Common myeloid progenitor, CD34-positive (primary cell): ENCODE measurements at regions of chr1 and their contacts with region 1.

Region 1: GRCh38 chr1:24847995-24848881 is 81.8 kb downstream of the RUNX3 start:
- DNase-seq: peak; percentile 98 to 99 (median 99)
- H3K4me3 ChIP-seq: peak overlapping the region; percentile 0 to 71 (median 57)
- H3K27ac ChIP-seq: peak overlapping the region in 1 of 2 experiments; percentile 58
- H3K4me1 ChIP-seq: peaks cover 18 to 62% (median 49%) of the 10 kb centered on the region in 4 experiments
- H3K27me3 ChIP-seq: no peaks in the 10 kb centered on the region

Region 2: DNA sequence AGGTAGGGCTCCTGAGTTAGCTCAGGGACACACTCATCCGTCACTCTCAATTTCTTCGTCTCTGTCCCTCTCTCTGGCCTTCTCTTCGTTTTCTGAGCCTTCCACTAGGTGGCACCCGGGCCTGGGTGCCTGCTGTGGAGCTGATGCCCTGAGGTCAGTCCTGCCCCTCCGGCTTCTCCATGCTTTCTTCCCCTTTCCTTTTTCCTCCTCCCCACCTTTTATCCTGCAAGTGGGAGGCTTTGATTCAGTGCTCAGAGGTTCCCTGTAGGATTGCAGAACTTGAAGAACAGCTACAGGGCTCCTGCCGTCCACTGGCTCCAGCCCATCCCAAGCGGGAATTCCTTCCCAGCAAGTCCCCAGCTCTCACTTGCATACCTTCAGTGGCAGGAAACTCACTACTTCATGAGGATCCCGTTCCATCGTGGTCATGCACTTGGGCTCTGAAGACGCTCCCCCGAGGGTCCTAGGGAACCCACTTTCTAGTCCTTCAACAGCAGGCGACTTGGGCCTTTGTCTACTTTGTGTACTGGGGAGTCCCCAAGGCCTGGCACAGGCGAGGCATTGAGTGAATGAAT is 159.5 kb before region 1 on chr1:
- CTCF ChIA-PET with region 1: interaction called, 16 read pairs
- POLR2A ChIA-PET with region 1: interaction called, 3 read pairs
- DNase-seq: peak; percentile 53 to 58 (median 54)
- H3K4me3 ChIP-seq: no peak overlapping the region
- H3K27ac ChIP-seq: no peak overlapping the region
- H3K4me1 ChIP-seq: peaks cover 0 to 2% (median under 1%) of the 10 kb centered on the region in 4 experiments
- H3K27me3 ChIP-seq: no peaks in the 10 kb centered on the region

Region 3: DNA sequence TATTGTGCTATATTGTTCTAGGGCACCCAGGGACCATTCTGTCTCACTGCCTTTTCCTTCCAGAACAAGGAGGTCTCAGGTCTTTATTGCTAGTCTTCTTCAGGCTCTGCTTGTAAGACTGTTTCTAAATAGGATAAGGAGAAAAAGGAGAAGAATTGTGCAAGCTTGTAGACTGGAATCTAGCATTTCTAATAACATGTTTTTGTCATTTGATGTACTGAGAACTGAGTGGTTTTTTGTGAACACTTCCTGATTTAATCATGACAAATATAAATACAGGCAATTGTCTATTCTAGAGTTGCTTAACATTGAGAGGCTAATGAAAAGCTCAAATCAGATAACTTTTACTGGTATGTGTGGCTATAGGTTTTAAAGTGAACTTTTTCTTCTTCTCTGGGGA is 25.4 kb before region 1 on chr1:
- CTCF ChIA-PET with region 1: no interaction called
- POLR2A ChIA-PET with region 1: no interaction called
- DNase-seq: no peak
- H3K4me3 ChIP-seq: no peak overlapping the region
- H3K27ac ChIP-seq: no peak overlapping the region
- H3K4me1 ChIP-seq: peaks cover 0 to 7% (median 2%) of the 10 kb centered on the region in 4 experiments
- H3K27me3 ChIP-seq: no peaks in the 10 kb centered on the region

Region 4: DNA sequence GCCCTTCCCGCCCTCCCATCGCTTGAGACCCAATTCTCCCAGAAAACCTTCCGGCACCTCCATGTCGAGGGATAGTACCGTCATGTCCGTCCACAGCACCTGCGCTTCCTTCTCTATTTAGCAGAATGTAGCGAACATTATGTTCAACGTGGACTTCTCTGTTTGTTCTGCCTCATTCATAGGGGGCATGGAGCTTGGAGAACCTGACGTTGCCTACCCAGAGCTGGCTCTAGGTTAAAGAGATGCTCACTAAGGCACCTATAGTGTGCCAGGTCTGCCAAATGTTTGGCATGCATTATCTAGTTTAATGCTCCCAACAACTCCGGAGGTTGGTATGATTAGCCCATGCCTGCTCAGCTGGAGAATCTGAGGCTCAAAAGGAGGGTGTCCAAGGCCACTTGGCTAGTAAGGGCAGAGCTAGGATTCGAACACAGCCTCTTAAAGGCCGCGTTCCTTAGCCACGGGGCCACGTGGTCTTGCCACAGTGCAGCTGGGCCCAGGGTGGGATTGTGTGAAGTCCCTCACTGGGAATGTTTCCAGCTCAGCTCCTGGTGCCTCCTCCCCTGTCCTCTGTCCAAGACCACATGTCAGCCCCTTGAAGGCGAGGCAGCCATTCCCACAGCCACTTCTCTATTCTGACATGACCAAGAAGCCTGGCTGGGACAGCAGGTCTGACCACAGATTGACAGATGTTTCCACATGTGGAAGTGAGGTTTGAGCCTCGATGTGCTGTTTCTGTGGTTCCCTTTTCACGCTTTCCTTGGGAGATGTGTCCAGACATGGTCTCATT is 24.0 kb after region 1 on chr1:
- CTCF ChIA-PET with region 1: interaction called, 38 read pairs
- POLR2A ChIA-PET with region 1: interaction called, 11 read pairs
- DNase-seq: peak; percentile 77 to 97 (median 96)
- H3K4me3 ChIP-seq: peak overlapping the region in 2 of 7 experiments; percentile 43 to 60
- H3K27ac ChIP-seq: peak overlapping the region in 1 of 2 experiments; percentile 62
- H3K4me1 ChIP-seq: peaks cover 2 to 79% (median 50%) of the 10 kb centered on the region in 4 experiments
- H3K27me3 ChIP-seq: no peaks in the 10 kb centered on the region

Region 5: DNA sequence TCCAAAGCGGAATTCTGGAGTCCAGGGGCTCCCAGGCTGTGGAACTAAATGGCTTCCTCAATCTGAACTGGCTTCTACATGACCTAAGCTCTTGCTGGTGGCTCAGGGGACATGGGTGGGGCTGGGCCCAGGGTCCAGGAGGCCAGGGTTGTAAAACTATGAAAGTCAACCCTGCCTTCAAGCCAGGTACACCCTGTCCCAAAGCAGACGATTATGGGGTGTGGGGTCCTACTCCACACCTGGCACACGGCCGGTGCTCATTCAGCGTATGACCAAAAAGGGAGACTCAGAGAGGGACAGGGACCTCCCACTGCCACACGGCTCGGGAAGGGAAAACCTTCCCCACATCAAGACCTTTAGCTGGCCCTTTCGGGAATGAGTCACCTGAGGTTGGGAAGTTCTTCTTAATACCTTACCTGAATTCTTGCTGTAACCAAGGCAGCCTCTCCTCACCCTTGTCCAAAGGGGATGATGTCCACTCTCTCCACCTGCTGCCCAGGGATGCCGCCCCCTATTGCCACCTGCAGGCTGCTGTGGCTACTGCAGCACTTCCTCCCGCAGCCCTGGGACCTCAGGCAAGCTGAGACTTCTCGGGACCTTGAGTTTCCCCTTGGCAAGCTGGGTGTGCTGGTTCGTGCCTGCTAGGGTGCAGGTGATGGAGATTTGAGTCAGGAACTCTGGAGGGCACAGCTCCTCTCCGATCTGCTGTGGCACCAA is 49.7 kb after region 1 on chr1:
- CTCF ChIA-PET with region 1: interaction called, 91 read pairs
- POLR2A ChIA-PET with region 1: interaction called, 14 read pairs
- DNase-seq: peak; percentile 29 to 53 (median 40)
- H3K4me3 ChIP-seq: no peak overlapping the region
- H3K27ac ChIP-seq: no peak overlapping the region
- H3K4me1 ChIP-seq: peaks cover 0 to 24% (median 17%) of the 10 kb centered on the region in 4 experiments
- H3K27me3 ChIP-seq: no peaks in the 10 kb centered on the region

Region 6: DNA sequence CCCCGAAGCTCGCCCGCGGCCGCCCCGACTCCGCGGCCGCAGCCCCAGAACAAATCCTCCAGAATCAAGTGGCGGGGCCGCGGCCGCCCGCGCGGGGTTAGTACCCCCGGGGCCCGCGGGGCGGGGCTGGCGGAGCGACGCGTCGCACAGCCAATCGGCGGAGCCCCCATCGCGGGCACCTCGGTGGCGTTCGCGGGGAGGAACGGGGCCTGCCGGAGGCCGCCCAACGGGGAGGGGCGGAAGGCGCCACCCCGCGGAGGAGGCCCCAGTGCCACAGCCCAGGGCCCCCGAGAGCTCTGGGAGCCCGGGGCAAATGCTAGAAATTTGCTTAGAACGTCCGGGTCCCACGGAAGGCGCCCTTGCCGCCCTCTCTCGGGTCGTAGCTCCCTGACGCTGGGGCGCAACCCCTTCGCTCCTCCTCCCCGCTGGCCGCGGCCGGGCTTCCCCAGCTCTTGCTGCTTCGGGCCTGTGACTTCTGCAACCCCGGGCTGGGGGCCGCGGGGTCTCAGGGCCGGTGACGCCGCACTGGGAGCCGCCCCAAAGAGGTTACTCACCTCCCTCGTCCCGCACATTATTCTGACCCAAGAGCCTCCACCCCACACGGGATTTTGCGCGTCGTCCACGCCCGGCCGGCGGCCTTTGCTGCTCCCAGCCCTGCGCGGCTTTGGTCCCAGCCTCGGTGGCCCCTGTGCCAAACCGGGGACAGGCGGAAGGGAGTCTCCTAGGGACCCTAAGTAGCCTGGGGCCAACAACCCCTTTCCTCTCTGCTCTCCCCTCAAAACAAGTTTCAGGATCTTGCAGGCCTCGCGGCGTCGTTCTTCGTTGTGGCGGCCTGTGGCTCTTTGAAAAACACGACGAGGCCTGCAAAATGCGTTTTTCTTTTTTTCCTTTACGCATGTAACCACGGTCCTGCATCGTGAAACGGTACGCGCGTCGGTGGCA is 82.2 kb after region 1 on chr1 and contains the start of gene RUNX3:
- CTCF ChIA-PET with region 1: interaction called, 40 read pairs
- POLR2A ChIA-PET with region 1: interaction called, 18 read pairs
- DNase-seq: peak; percentile 89 to 94 (median 93)
- H3K4me3 ChIP-seq: peak within 1 kb of the TSS; percentile 76 to 95 (median 85)
- H3K27ac ChIP-seq: peak within 1 kb of the TSS; percentile 72 to 84
- H3K4me1 ChIP-seq: peaks cover 6 to 71% (median 46%) of the 10 kb centered on the region in 4 experiments
- H3K27me3 ChIP-seq: no peaks in the 10 kb centered on the region

Region 7: DNA sequence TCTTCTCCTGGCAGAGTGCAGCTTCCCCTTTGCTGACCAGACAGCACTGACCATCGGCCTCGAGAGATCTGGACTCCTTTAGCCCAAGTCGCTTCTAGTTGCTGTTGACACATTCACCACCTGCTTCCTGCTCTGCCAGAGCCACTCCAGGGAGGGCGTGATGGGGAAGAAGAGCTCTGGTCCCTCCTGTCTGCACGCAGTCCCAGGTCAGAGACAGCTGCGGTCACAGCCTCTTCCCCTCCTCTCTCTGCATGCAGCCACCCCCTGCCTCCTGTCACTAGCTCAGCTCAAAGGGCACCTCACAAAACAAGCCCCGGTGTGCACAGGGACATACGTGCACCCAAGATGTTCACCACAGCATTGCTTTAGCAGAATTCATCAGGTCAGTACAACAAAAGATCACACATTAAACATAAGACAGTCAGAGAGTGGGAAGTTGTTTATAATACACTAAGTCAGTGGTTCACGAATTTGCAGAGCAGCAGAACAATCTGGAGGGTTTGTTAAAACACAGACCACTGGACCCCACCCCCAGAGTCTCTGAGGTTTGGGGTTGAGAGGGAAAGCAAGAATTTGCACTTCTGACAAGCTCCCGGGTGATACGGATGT is 251.2 kb after region 1 on chr1:
- CTCF ChIA-PET with region 1: interaction called, 11 read pairs
- POLR2A ChIA-PET with region 1: no interaction called
- DNase-seq: peak in 2 of 3 donors; percentile 76 to 81
- H3K4me3 ChIP-seq: peak overlapping the region in 1 of 7 experiments; percentile 19
- H3K27ac ChIP-seq: no peak overlapping the region
- H3K4me1 ChIP-seq: peaks cover 13 to 88% (median 38%) of the 10 kb centered on the region in 4 experiments
- H3K27me3 ChIP-seq: no peaks in the 10 kb centered on the region